ENCODE measurements at regions of chr11 and their contacts with region 1.

Region 1: GRCh38 chr11:44621140-44621681 is 55.7 kb downstream of the CD82 start:
- DNase-seq: peak; percentile 65
- ATAC-seq: peak; percentile 65
- H3K4me3 Mint-ChIP-seq: no peak overlapping the region
- H3K27ac Mint-ChIP-seq: no peak overlapping the region
- H3K4me1 Mint-ChIP-seq: peaks cover 13% of the 10 kb centered on the region
- H3K27me3 Mint-ChIP-seq: no peaks in the 10 kb centered on the region

Region 2: GRCh38 chr11:44565211-44565952 is 55.8 kb before region 1 on chr11 and contains the start of gene CD82:
- CTCF ChIA-PET with region 1: interaction called, 334 read pairs
- POLR2A ChIA-PET with region 1: no interaction called
- DNase-seq: peak; percentile 99
- ATAC-seq: peak; percentile 88
- H3K4me3 Mint-ChIP-seq: peak within 1 kb of the TSS; percentile 87
- H3K27ac Mint-ChIP-seq: peak within 1 kb of the TSS; percentile 84
- H3K4me1 Mint-ChIP-seq: peaks cover 72% of the 10 kb centered on the region
- H3K27me3 Mint-ChIP-seq: no peaks in the 10 kb centered on the region
- total RNA-seq, gene CD82: 68.2 to 72.9 TPM

Region 3: GRCh38 chr11:44574610-44575287 is 46.5 kb before region 1 on chr11:
- CTCF ChIA-PET with region 1: interaction called, 17 read pairs
- POLR2A ChIA-PET with region 1: no interaction called
- DNase-seq: peak; percentile 79
- ATAC-seq: peak; percentile 75
- H3K4me3 Mint-ChIP-seq: peak overlapping the region; percentile 64
- H3K27ac Mint-ChIP-seq: peak overlapping the region; percentile 94
- H3K4me1 Mint-ChIP-seq: peaks cover 95% of the 10 kb centered on the region
- H3K27me3 Mint-ChIP-seq: no peaks in the 10 kb centered on the region